Panc1 (cell line): ENCODE measurements at regions of chr7 and their contacts with region 1.

Region 1: DNA sequence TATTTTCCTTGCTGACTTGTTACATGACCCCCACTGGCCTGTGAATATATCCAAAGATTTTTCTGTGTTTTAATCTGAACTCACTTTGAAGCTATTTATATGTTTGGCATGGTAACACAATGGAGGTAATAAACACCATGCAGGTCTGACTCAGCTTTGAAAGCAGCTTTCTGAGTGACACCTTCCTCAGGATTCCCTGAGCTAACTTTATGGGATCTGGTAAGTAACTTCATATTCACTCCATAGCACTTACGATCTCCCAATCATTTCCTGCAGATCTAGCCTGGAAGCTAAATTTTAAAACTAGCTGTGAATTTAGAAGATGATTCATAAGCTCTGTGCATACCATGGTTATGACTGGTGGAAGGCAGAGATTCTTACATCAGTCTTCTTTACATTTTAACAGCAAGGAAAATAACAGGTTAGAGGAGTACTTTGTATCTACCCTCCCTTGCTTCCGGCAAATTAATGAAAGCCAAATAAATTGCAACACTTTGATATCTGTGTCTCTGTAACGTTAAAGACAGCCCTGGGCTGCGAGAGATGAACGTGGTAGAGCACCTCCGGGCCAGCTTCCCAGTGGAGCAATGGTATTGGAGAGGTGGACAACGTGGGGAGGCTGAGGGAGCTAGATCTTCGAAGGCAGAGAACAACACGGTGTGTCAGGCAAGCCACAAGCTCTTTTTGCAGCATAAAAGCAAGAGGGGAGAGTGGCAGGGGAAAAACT is 170.2 kb upstream of the KLF14 start:
- DNase-seq: peak; percentile 96
- ATAC-seq: peak; percentile 55
- H3K4me3 ChIP-seq: peak overlapping the region in 1 of 2 experiments; percentile 21; a peak in 1 of 4 replicates
- H3K27ac ChIP-seq: peak overlapping the region; percentile 100
- H3K4me1 ChIP-seq: peaks cover 97% of the 10 kb centered on the region
- H3K27me3 ChIP-seq: no peaks in the 10 kb centered on the region
- CTCF ChIP-seq: no peak

Region 2: DNA sequence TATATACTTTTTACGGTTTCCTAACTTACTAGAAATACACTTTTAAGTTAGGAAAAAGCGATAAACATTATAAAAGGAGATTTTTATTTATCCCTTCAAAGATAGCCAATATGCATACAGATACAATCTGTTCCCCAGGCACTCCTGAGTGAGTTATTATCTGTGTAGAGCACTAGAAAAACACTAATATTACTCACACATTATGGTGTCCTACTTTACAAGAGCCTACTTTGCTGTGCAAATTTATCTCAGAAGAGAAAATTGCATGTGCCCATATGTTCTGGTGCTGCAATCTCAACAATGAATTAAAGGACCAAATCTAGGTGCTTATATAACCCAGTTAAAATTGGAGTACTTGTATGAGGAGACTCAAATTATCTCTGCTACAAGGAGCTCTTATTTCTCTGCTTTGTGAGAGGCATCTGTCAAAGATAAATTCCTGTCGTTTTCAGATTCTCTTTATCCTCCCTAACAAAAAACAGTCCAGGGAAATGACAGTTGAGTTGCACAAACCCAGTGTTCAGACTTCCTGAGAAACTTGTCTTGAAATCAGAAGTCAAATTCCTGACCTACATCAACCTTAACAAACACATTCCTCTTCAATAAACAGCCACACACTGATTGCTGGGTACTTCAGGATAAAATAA is 495.0 kb before region 1 on chr7:
- CTCF ChIA-PET with region 1: no interaction called
- POLR2A ChIA-PET with region 1: no interaction called
- in situ Hi-C with region 1: no loop called
- intact Hi-C with region 1: no loop called
- DNase-seq: no peak
- ATAC-seq: no peak
- H3K4me3 ChIP-seq: no peak overlapping the region
- H3K27ac ChIP-seq: no peak overlapping the region
- H3K4me1 ChIP-seq: no peaks in the 10 kb centered on the region
- H3K27me3 ChIP-seq: no peaks in the 10 kb centered on the region
- CTCF ChIP-seq: no peak

Region 3: GRCh38 chr7:130777426-130777825 is 126.8 kb before region 1 on chr7:
- CTCF ChIA-PET with region 1: no interaction called
- POLR2A ChIA-PET with region 1: interaction called, 11 read pairs
- in situ Hi-C with region 1: no loop called
- intact Hi-C with region 1: no loop called
- DNase-seq: no peak
- ATAC-seq: no peak
- H3K4me3 ChIP-seq: no peak overlapping the region
- H3K27ac ChIP-seq: no peak overlapping the region
- H3K4me1 ChIP-seq: no peaks in the 10 kb centered on the region
- H3K27me3 ChIP-seq: peaks cover 3% of the 10 kb centered on the region; the same call in 1 of the 2 replicates
- CTCF ChIP-seq: no peak

Region 4: GRCh38 chr7:130929896-130930659 is 25.9 kb after region 1 on chr7:
- CTCF ChIA-PET with region 1: no interaction called
- POLR2A ChIA-PET with region 1: interaction called, 11 read pairs
- in situ Hi-C with region 1: no loop called
- intact Hi-C with region 1: no loop called
- DNase-seq: no peak
- ATAC-seq: no peak
- H3K4me3 ChIP-seq: no peak overlapping the region
- H3K27ac ChIP-seq: peak overlapping the region; percentile 100
- H3K4me1 ChIP-seq: peaks cover 84% of the 10 kb centered on the region
- H3K27me3 ChIP-seq: no peaks in the 10 kb centered on the region
- CTCF ChIP-seq: no peak

Region 5: GRCh38 chr7:131057015-131057793 is 153.0 kb after region 1 on chr7:
- CTCF ChIA-PET with region 1: no interaction called
- POLR2A ChIA-PET with region 1: no interaction called
- in situ Hi-C with region 1: no loop called
- intact Hi-C with region 1: no loop called
- DNase-seq: no peak
- ATAC-seq: no peak
- H3K4me3 ChIP-seq: no peak overlapping the region
- H3K27ac ChIP-seq: no peak overlapping the region
- H3K4me1 ChIP-seq: no peaks in the 10 kb centered on the region
- H3K27me3 ChIP-seq: no peaks in the 10 kb centered on the region
- CTCF ChIP-seq: no peak